HepG2 (cell line): ENCODE measurements at regions of chr3 and their contacts with region 1.

Region 1: DNA sequence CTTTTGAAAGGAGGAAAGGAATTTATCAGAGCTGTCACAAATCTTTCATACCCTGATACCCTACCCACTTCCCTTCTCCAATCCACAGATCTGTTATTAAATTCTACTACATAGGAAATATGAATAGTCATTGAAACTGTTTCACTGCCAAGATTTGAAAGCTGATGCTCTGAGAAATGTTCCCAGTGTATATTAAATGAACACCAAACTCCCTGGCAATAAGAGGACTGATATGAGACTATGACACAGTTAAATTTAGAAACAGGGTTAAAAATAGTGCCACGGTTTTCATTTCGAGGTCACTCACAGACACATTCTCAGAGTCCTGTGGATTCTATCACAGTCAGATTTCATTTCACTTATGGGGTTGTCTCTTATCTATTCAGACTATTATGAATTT is 27.2 kb upstream of the GBE1 start:
- DNase-seq: no peak
- ATAC-seq: no peak
- H3K4me3 ChIP-seq: no peak overlapping the region
- H3K27ac ChIP-seq: no peak overlapping the region
- H3K4me1 ChIP-seq: no peaks in the 10 kb centered on the region
- H3K27me3 ChIP-seq: no peaks in the 10 kb centered on the region
- CTCF ChIP-seq: no peak
- EP300 ChIP-seq: no peak
- POLR2A ChIP-seq: no peak
- RAD21 ChIP-seq: no peak

Region 2: DNA sequence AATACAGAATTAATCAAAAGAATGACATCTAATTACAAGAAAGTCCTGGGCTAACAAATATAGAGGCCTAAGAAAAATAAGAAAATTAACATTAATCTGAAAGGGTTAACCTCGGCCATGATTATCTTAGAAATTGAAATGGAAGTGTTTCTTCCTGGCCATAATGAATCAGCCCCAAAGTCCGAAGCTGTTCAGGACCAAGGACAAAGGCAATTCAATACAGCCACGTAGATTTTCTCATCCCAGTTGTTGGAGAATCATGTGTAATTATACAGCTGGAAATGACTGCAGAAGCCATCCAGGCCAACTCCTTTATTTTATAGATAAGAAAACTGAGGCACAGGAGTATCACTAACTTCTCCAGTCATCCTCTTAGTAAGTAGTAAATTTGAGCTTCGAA is 10.8 kb after region 1 on chr3:
- CTCF ChIA-PET with region 1: no interaction called
- POLR2A ChIA-PET with region 1: no interaction called
- in situ Hi-C with region 1: no loop called
- intact Hi-C with region 1: loop called (anchors 1 kb)
- DNase-seq: no peak
- ATAC-seq: no peak
- H3K4me3 ChIP-seq: no peak overlapping the region
- H3K27ac ChIP-seq: no peak overlapping the region
- H3K4me1 ChIP-seq: no peaks in the 10 kb centered on the region
- H3K27me3 ChIP-seq: no peaks in the 10 kb centered on the region
- CTCF ChIP-seq: no peak
- EP300 ChIP-seq: no peak
- POLR2A ChIP-seq: no peak
- RAD21 ChIP-seq: no peak